Activated B cell treated with CpG ODN at 0.5 μM for 24 hours (primary cell): ENCODE measurements at regions of chr4 and their contacts with region 1.

Region 1: GRCh38 chr4:56757821-56758411 is 63.6 kb downstream of the SPINK2 start:
- DNase-seq: peak; percentile 55
- ATAC-seq: peak; percentile 96
- H3K4me3 Mint-ChIP-seq: peak overlapping the region; percentile 81
- H3K27ac Mint-ChIP-seq: peak overlapping the region; percentile 96
- H3K4me1 Mint-ChIP-seq: peaks cover 63% of the 10 kb centered on the region
- H3K27me3 Mint-ChIP-seq: no peaks in the 10 kb centered on the region
- CTCF ChIP-seq: no peak

Region 2: DNA sequence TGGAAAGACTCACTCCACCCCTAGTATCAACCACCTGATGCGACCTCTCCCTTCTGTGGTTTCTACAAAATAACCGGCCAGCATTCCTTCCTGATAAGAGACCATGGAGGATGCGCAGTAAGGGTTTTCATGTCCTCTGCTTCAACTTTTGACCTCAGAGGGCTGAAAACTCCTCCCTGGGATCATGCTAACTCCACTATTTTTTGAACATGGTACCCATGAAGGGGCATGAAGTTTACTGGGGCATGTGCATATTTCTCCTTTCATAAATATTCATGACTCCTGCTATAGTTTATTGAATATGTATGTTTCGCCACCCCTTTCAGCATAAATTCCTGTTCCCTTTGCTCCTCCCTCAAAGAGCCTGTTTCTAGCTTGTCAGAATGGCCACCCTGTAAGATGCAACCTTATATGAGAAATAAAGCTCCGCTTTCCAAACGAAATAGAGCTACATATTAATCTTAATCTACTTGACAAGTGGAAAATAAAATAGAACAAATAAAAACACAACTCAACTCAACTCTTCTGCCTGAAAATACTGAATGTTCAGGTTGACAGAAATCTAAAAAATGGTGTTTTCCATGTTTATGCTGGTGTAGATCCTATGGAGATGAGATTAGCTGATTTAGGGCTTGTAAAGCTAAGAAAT is 1027.9 kb before region 1 on chr4:
- CTCF ChIA-PET with region 1: no interaction called
- POLR2A ChIA-PET with region 1: no interaction called
- intact Hi-C with region 1: no loop called
- DNase-seq: no peak
- ATAC-seq: no peak
- H3K4me3 Mint-ChIP-seq: no peak overlapping the region
- H3K27ac Mint-ChIP-seq: no peak overlapping the region
- H3K4me1 Mint-ChIP-seq: peaks cover 2% of the 10 kb centered on the region
- H3K27me3 Mint-ChIP-seq: peaks cover 7% of the 10 kb centered on the region
- CTCF ChIP-seq: no peak

Region 3: GRCh38 chr4:56641494-56642051 is 116.3 kb before region 1 on chr4:
- CTCF ChIA-PET with region 1: no interaction called
- POLR2A ChIA-PET with region 1: no interaction called
- intact Hi-C with region 1: no loop called
- DNase-seq: no peak
- ATAC-seq: no peak
- H3K4me3 Mint-ChIP-seq: no peak overlapping the region
- H3K27ac Mint-ChIP-seq: no peak overlapping the region
- H3K4me1 Mint-ChIP-seq: no peaks in the 10 kb centered on the region
- H3K27me3 Mint-ChIP-seq: no peaks in the 10 kb centered on the region
- CTCF ChIP-seq: no peak

Region 4: DNA sequence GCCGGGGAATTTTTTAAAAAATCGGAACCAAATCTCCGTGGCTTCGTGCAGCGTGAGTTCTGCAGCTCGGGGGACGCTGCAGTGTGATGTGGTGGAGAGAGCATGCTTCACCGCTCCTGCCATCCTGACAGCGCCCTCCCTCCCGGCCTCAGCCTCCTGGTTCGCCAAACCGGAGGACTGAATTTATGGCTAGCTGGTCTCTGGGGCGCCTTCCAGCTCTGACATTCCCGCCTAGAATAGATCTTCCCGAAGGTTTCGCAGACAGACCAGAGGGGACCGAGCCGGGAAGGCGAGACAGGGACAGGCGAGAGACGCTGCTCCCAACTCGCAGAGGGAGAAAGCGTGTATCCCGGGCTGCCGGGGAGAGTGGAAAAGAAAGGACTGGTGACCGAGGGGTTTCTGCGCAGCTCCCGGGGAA is 102.7 kb before region 1 on chr4:
- CTCF ChIA-PET with region 1: no interaction called
- POLR2A ChIA-PET with region 1: no interaction called
- intact Hi-C with region 1: loop called (anchors 2 kb)
- DNase-seq: peak; percentile 23
- ATAC-seq: peak; percentile 25
- H3K4me3 Mint-ChIP-seq: peak overlapping the region; percentile 92
- H3K27ac Mint-ChIP-seq: peak overlapping the region; percentile 46
- H3K4me1 Mint-ChIP-seq: peaks cover 65% of the 10 kb centered on the region
- H3K27me3 Mint-ChIP-seq: peaks cover 2% of the 10 kb centered on the region
- CTCF ChIP-seq: no peak

Region 5: GRCh38 chr4:56742080-56742871 is 15.6 kb before region 1 on chr4:
- CTCF ChIA-PET with region 1: no interaction called
- POLR2A ChIA-PET with region 1: no interaction called
- intact Hi-C with region 1: loop called (anchors 2 kb)
- DNase-seq: no peak
- ATAC-seq: no peak
- H3K4me3 Mint-ChIP-seq: no peak overlapping the region
- H3K27ac Mint-ChIP-seq: no peak overlapping the region
- H3K4me1 Mint-ChIP-seq: peaks cover 12% of the 10 kb centered on the region
- H3K27me3 Mint-ChIP-seq: no peaks in the 10 kb centered on the region
- CTCF ChIP-seq: no peak

Region 6: DNA sequence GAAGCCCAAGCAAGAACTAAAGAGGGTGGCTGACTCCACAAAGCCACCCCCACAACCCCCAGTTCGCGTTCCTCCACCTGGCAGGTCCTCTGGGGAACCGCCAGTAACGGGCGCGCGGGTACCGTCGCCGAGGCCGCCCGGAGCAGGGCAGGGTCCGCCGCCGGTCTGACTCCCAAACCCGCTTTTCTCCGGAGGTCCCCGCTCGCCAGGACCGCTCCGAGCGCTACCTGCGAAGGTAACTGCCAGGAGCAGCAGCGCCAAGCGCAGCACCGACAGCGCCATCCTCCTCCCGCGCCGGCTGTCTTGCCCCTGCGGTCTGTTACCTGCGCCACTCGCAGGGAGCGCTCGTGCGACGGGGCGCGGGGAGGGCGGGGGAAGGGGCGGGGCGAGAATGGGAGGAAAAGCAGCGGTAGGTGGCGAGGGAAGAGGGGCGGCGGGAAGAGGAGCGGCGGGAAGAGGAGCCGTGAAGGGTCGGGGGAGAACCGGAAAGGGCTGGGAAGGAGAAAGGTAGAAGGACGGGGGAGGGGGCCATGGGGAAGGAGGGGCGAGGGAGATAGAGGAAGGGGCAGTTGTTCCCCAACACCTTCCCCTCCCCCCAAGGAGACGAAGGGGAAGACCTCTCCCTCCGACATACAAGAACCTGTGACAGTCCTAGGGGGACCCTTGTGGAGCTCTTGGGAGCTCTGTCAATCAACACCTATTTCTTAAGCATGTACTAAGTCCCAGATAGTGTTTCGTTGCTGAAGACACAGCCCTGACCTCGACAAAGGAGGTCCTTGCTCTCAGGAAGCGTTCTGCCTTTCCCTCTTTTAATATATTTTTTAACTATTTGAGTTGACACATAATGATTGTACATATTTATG is 63.7 kb after region 1 on chr4 and contains the start of gene SPINK2:
- CTCF ChIA-PET with region 1: no interaction called
- POLR2A ChIA-PET with region 1: no interaction called
- intact Hi-C with region 1: no loop called
- DNase-seq: peak; percentile 58
- ATAC-seq: peak; percentile 87
- H3K4me3 Mint-ChIP-seq: peak within 1 kb of the TSS; percentile 81
- H3K27ac Mint-ChIP-seq: peak within 1 kb of the TSS; percentile 24
- H3K4me1 Mint-ChIP-seq: peaks cover 31% of the 10 kb centered on the region
- H3K27me3 Mint-ChIP-seq: no peaks in the 10 kb centered on the region
- CTCF ChIP-seq: no peak
- total RNA-seq, gene SPINK2: 1.2 TPM in 1 of 2 replicates, not detected in the other